ENCODE measurements at regions of chr11 and their contacts with region 1.

Region 1: GRCh38 chr11:63536669-63537292 is at the start of gene PLAAT4:
- DNase-seq: peak in 9 of 14 experiments; percentile 16 to 82 (median 37)
- ATAC-seq: peak; percentile 62
- H3K4me3 ChIP-seq: peak within 1 kb of the TSS; percentile 90
- H3K4me3 Mint-ChIP-seq: peak within 1 kb of the TSS; percentile 100
- H3K27ac ChIP-seq: peak within 1 kb of the TSS; percentile 81 to 82
- H3K27ac Mint-ChIP-seq: peak within 1 kb of the TSS; percentile 98
- H3K4me1 ChIP-seq: peaks cover 87% of the 10 kb centered on the region
- H3K4me1 Mint-ChIP-seq: peaks cover 92% of the 10 kb centered on the region
- H3K27me3 ChIP-seq: no peaks in the 10 kb centered on the region
- H3K27me3 Mint-ChIP-seq: no peaks in the 10 kb centered on the region
- CTCF ChIP-seq: no peak
- total RNA-seq, gene PLAAT4: 80.4 to 82.4 TPM

Region 2: DNA sequence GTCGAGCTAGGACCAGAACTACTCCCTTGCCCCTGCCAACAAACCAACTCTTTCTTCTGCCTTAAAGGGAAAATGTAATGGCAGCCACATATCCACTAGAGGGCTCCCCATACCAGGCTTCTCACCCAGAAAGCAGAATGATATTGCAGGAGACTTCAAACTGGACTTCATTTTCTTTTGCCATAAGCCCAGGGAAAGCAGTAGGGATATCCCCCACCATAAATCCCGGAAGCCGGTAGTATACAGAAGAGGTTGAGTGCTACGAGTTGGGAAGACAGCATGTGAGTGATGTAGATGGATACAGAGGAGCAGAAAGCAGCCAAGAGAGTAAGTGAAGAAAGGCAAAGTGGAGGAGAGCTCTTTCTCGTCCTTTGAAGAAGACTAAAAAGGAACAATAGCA is 57.9 kb before region 1 on chr11:
- CTCF ChIA-PET with region 1: interaction called, 3 read pairs
- POLR2A ChIA-PET with region 1: interaction called, 14 read pairs
- intact Hi-C with region 1: no loop called
- DNase-seq: peak; percentile 18 to 79 (median 38)
- ATAC-seq: peak; percentile 61
- H3K4me3 ChIP-seq: no peak overlapping the region
- H3K4me3 Mint-ChIP-seq: no peak overlapping the region
- H3K27ac ChIP-seq: no peak overlapping the region
- H3K27ac Mint-ChIP-seq: no peak overlapping the region
- H3K4me1 ChIP-seq: peaks cover 2% of the 10 kb centered on the region
- H3K4me1 Mint-ChIP-seq: no peaks in the 10 kb centered on the region
- H3K27me3 ChIP-seq: no peaks in the 10 kb centered on the region
- H3K27me3 Mint-ChIP-seq: peaks cover 12% of the 10 kb centered on the region
- CTCF ChIP-seq: peak; percentile 93

Region 3: GRCh38 chr11:63518548-63518947 is 18.2 kb before region 1 on chr11:
- CTCF ChIA-PET with region 1: no interaction called
- POLR2A ChIA-PET with region 1: interaction called, 18 read pairs
- intact Hi-C with region 1: no loop called
- DNase-seq: peak in 3 of 14 experiments; percentile 33 to 74 (median 33)
- ATAC-seq: peak; percentile 66
- H3K4me3 ChIP-seq: no peak overlapping the region
- H3K4me3 Mint-ChIP-seq: no peak overlapping the region
- H3K27ac ChIP-seq: no peak overlapping the region
- H3K27ac Mint-ChIP-seq: peak overlapping the region; percentile 58
- H3K4me1 ChIP-seq: peaks cover 6% of the 10 kb centered on the region
- H3K4me1 Mint-ChIP-seq: peaks cover 21% of the 10 kb centered on the region
- H3K27me3 ChIP-seq: no peaks in the 10 kb centered on the region
- H3K27me3 Mint-ChIP-seq: no peaks in the 10 kb centered on the region
- CTCF ChIP-seq: no peak

Region 4: DNA sequence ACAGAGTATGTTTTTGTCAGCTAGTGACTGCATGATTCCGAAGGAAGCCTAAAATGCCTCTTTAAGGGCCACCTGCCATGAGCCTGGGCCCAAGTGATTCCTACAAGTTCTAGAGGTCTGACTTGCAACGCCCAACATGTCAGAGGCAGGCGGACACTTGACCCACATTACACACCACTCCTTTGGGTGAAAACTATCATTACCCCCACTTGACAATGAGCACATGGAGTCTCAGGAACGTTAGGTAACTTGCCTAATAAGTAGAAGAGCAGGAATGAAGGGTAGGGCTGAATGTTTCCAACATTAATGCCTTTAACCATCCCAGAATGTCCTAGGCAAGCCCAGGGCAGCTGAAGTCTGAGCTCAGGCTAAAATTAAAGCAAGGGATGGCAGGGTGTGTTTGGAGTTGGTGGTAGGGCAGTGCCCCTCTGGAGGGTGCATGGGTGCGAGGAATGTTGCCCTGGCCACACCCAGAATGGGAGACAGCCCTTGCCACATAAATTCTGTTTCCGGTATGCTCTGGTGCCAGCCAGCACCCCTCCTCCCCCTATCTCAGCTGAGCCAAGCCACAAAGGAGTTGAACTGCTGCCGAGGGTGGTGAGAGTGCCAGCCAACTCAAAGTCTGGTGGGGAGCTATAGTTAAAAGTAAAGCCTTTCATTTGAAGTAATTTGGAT is 23.9 kb after region 1 on chr11:
- CTCF ChIA-PET with region 1: no interaction called
- POLR2A ChIA-PET with region 1: interaction called, 44 read pairs
- intact Hi-C with region 1: no loop called
- DNase-seq: peak in 11 of 14 experiments; percentile 17 to 70 (median 51)
- ATAC-seq: peak; percentile 89
- H3K4me3 ChIP-seq: no peak overlapping the region
- H3K4me3 Mint-ChIP-seq: peak overlapping the region; percentile 59
- H3K27ac ChIP-seq: no peak overlapping the region
- H3K27ac Mint-ChIP-seq: peak overlapping the region; percentile 71
- H3K4me1 ChIP-seq: peaks cover 47% of the 10 kb centered on the region
- H3K4me1 Mint-ChIP-seq: peaks cover 70% of the 10 kb centered on the region
- H3K27me3 ChIP-seq: no peaks in the 10 kb centered on the region
- H3K27me3 Mint-ChIP-seq: no peaks in the 10 kb centered on the region
- CTCF ChIP-seq: no peak

Region 5: DNA sequence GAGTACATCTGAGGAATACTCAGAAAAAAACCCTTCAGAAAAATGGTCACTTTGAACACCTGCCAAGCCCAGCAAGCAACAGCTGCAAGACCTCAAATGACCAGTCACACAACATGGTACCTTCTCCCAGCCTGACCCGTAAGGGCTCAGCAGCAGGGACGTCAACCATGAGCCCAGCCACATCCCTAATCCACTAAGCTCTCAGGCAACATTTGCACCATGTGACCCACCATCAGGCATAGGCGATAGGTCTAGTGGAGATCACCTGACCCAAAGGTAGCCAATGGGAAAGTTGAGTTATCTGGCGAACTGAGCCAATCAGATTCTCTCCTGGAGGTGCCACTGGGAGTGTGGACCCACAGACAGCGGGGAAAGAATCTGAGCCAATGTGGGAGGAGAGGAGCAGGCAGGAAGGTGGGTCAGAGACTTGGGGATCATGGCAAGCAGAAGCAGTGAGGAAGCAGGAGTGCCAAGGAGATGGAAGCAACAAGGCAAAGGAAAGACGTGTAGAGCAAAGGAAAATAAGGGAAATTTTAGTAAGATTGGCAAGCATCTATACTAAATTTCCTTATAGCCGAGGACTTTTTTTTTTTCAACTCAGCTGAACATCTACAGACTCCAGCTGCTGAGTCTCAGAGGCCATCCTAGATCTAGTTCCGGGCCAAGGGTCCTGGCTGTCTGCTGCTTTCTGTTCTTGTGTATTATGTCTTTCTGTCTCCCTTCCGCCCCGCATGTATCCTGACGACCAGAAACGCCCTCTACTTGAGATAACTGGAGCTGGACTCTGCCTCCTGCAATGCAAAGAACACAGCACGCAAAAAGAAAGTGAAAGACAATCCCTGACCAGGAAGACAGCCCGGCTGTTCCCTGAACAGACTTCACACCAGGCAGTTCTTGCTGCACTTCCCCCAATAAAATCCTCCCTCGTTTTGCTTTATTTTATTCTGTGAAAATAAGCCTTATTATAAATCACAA is 37.4 kb after region 1 on chr11:
- CTCF ChIA-PET with region 1: no interaction called
- POLR2A ChIA-PET with region 1: interaction called, 11 read pairs
- intact Hi-C with region 1: no loop called
- DNase-seq: peak in 7 of 14 experiments; percentile 12 to 80 (median 55)
- ATAC-seq: peak; percentile 69
- H3K4me3 ChIP-seq: peak overlapping the region; percentile 41
- H3K4me3 Mint-ChIP-seq: peak overlapping the region; percentile 78
- H3K27ac ChIP-seq: peak overlapping the region in 1 of 2 donors; percentile 31
- H3K27ac Mint-ChIP-seq: peak overlapping the region; percentile 65
- H3K4me1 ChIP-seq: peaks cover 18% of the 10 kb centered on the region
- H3K4me1 Mint-ChIP-seq: peaks cover 34% of the 10 kb centered on the region
- H3K27me3 ChIP-seq: no peaks in the 10 kb centered on the region
- H3K27me3 Mint-ChIP-seq: no peaks in the 10 kb centered on the region
- CTCF ChIP-seq: no peak

Measured in CD4-positive, alpha-beta T cell (primary cell).